ENCODE measurements at regions of chr6 and their contacts with region 1.

Region 1: GRCh38 chr6:167815296-167816006 is 11.3 kb upstream of the AFDN start:
- DNase-seq: peak; percentile 92 to 95
- H3K4me3 ChIP-seq: peak overlapping the region; percentile 69
- H3K4me3 Mint-ChIP-seq: peak overlapping the region; percentile 85
- H3K27ac Mint-ChIP-seq: peak overlapping the region; percentile 88
- H3K4me1 ChIP-seq: peaks cover 4% of the 10 kb centered on the region; the same call in 1 of the 2 replicates
- H3K4me1 Mint-ChIP-seq: peaks cover 17% of the 10 kb centered on the region
- H3K27me3 ChIP-seq: no peaks in the 10 kb centered on the region
- H3K27me3 Mint-ChIP-seq: no peaks in the 10 kb centered on the region
- CTCF ChIP-seq: peak; percentile 44 to 74

Region 2: DNA sequence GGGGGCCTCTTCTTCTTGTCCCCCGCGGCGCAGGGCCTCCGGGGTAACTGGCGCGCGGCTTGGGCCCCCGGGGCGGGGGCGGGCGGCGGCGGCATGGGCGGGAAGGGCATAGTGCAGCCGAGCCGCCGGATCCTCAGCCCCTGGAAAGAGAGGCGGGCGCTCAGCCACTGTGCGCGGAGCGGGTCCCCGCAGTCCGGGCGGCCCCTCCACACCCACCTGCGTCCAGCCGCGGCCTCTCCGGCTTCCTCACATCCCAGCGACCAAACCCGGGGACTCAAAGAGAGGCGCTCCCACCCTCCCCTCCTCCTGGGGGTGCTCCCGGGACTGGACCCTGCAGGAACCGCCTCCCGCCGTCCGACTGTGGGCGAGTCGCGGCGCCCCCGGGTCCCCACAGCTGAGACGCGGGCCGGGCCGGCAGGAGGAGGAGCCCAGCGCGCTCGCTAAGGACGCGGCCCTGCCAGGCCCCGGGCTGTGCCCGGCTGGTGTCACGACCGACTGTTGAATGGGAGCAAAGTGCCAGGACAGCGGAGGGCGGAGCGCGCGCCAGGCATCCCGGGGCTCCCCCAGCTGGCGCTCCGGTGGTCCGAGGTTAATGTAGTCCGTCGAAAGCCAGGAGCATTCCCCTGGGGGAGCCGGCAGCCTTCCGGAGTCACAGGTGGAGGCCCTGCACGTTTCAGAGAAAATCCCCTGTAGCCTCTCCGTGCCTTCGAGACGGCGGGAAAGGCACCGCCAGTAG is 1507.2 kb before region 1 on chr6 and contains the start of gene PRR18:
- CTCF ChIA-PET with region 1: no interaction called
- POLR2A ChIA-PET with region 1: interaction called, 11 read pairs
- intact Hi-C with region 1: no loop called
- DNase-seq: peak in 1 of 2 experiments; percentile 48
- H3K4me3 ChIP-seq: peak within 1 kb of the TSS; percentile 62
- H3K4me3 Mint-ChIP-seq: peak within 1 kb of the TSS; percentile 52
- H3K27ac Mint-ChIP-seq: no peak within 1 kb of the TSS
- H3K4me1 ChIP-seq: 0 out of 2 replicates have a peak, but pooled peaks cover 3% of the 10 kb centered on the region
- H3K4me1 Mint-ChIP-seq: no peaks in the 10 kb centered on the region
- H3K27me3 ChIP-seq: no peaks in the 10 kb centered on the region
- H3K27me3 Mint-ChIP-seq: no peaks in the 10 kb centered on the region
- CTCF ChIP-seq: no peak
- total RNA-seq, gene PRR18: 0.77 and 0.95 TPM in 2 replicates

Region 3: DNA sequence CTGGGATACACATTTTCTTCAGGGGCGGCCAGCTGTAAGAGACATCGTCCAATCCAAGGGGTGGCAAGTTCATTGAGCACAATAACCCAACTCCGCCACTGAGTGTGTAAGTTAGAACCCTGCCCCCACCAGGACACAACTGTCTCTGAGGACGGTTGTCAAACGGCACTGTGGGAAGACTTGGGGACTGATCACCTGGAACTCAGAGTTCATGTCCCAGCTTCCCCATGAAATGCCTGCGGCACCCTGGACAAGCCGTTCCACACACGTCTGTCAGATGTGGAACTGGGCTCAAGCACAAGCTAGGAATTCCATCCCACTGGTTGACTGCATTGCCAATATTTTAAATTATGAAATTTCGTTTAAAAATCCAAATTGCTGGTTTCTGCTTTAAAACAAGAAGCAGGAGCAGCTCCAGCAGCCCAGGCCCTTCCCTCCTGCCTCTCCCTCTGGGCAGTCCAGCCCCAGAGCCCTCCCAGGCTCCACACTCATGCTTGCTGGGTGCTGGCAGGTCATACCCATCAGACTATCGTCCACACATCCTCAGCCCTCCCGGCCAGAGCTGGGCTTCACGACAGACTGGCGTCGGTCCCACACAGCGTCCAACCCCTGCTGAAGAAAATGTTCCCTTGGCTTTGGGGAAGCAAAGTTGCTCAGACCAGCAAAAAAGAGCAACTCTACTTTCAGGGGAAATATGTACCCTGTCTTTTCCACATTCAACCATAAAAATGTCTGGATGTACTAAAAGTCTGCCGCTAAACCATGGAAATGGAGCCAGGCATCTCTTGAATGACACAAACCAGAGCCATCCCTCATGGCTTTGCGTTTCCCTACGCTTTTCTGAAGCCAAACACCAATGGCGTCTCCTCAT is 69.5 kb before region 1 on chr6:
- CTCF ChIA-PET with region 1: no interaction called
- POLR2A ChIA-PET with region 1: interaction called, 3 read pairs
- intact Hi-C with region 1: loop called (anchors 5 kb)
- DNase-seq: no peak
- H3K4me3 ChIP-seq: no peak overlapping the region
- H3K4me3 Mint-ChIP-seq: peak overlapping the region; percentile 54
- H3K27ac Mint-ChIP-seq: peak overlapping the region; percentile 81
- H3K4me1 ChIP-seq: peaks cover 63% of the 10 kb centered on the region
- H3K4me1 Mint-ChIP-seq: peaks cover 20% of the 10 kb centered on the region
- H3K27me3 ChIP-seq: no peaks in the 10 kb centered on the region
- H3K27me3 Mint-ChIP-seq: no peaks in the 10 kb centered on the region
- CTCF ChIP-seq: no peak